ENCODE measurements at regions of chr1 and their contacts with region 1.

Region 1: DNA sequence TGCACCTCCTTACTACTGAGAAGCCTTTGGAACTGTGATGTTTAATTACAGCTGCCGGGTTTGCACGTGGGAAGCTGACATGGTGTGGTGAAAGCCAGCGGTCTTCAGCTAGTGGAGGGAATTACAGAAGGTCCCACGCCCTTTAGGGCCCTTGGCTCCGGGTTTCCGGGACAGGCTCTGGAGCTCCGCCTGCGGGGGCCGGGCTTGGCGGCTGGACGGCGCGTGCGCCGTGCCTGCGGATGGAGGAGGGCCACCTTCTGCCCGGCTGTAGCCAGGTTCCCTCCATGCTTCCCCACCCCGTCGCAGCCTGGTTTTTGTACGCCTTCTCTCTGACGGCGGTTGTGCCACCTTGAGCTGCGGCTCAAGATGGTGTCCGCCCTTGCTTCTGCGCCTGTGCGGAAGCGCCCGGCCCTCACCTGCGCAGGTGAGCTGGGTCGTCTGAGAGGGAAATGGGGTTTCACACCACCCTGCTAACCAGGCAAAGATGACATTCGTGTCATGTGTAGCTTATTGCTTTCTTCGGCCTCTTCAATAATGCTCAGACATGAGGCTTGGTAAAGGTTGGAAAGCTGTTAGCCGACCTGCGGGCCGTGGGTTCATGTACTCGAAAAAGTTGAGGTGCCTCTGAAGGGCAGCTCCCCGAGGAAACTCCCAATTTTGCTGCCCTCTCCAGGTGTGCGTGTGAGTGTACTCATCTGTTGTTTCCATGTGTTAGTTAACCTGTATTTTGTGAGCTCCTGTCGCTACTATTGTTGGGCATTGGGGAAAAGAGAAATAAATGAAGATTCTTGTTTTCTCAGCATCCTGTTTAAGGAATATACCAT is 36.6 kb upstream of the OPRD1 start:
- ATAC-seq: peak; percentile 19 to 96 (median 58)
- H3K4me3 ChIP-seq: no peak overlapping the region
- H3K27ac ChIP-seq: no peak overlapping the region
- H3K4me1 ChIP-seq: no peaks in the 10 kb centered on the region

Region 2: GRCh38 chr1:28877132-28877781 is 101.9 kb after region 1 on chr1:
- in situ Hi-C with region 1: loop called in 6 of 9 experiments (anchors 10 kb)
- ATAC-seq: peak; percentile 75 to 85 (median 81)
- H3K4me3 ChIP-seq: no peak overlapping the region
- H3K27ac ChIP-seq: no peak overlapping the region
- H3K4me1 ChIP-seq: no peaks in the 10 kb centered on the region

Region 3: GRCh38 chr1:28971980-28972771 is 196.8 kb after region 1 on chr1:
- in situ Hi-C with region 1: no loop called
- ATAC-seq: peak in 7 of 8 experiments; percentile 27 to 91 (median 62)
- H3K4me3 ChIP-seq: no peak overlapping the region
- H3K27ac ChIP-seq: peak overlapping the region in 1 of 2 donors; percentile 47
- H3K4me1 ChIP-seq: peaks cover 0 to 10% of the 10 kb centered on the region in 2 donors

Region 4: GRCh38 chr1:29033829-29034466 is 258.6 kb after region 1 on chr1:
- in situ Hi-C with region 1: loop called in 2 of 9 experiments (anchors 10 to 25 kb)
- ATAC-seq: peak; percentile 28 to 56 (median 44)
- H3K4me3 ChIP-seq: no peak overlapping the region
- H3K27ac ChIP-seq: no peak overlapping the region
- H3K4me1 ChIP-seq: peaks cover 4 to 9% of the 10 kb centered on the region in 2 donors

Region 5: DNA sequence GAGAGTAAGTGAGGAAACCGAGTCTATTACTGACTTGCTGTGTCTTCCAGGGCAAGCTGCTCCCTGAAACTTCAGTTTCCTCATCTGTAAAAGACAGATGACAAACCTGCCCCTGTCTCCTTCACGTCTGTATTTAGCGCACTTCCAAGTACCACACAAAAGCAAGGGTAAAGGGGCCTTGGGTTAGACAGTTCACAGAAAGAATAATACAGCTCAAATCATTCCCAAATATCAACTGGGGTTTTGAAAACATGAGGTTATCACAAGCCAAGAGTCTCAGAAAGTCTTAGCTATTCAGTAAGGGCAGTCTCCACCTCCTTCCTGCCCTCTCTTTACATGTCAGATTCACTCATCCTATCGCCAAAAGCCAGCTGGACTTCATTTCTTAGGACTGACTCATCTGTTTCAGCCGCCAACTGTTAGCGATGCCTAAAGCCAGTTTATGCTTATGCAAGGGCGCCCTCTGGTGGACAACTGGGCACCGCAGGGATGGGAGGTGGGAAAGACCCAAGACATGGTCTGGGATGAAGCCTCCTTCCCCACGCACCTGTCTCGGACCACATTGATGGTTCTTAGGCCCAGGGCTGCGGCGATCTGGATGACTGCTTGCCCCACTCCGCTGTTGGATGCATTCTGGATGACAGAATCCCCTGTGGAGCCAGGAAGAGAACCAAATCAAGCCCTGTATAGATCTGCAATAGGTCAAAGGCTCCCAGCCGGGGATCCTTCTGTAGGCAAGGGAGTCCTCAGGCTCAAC is 427.4 kb after region 1 on chr1:
- in situ Hi-C with region 1: loop called in 1 of 9 experiments (anchors 25 kb)
- ATAC-seq: peak; percentile 97 to 100 (median 98)
- H3K4me3 ChIP-seq: no peak overlapping the region
- H3K27ac ChIP-seq: no peak overlapping the region
- H3K4me1 ChIP-seq: peaks cover 0 to 4% of the 10 kb centered on the region in 2 donors

Measured in motor neuron (in vitro differentiated cells).